Prostate gland (tissue), 2 donors: ENCODE measurements at regions of chr15 and their contacts with region 1.

Region 1: GRCh38 chr15:36501063-36501678 is 78.3 kb upstream of the CDIN1 start:
- DNase-seq: peak; percentile 46
- H3K4me3 ChIP-seq: no peak overlapping the region
- H3K27ac ChIP-seq: no peak overlapping the region
- H3K4me1 ChIP-seq: no peaks in the 10 kb centered on the region
- H3K27me3 ChIP-seq: no peaks in the 10 kb centered on the region
- CTCF ChIP-seq: peak; percentile 41 to 71 (median 58)
- POLR2A ChIP-seq: no peak

Region 2: GRCh38 chr15:36877796-36878683 is 376.9 kb after region 1 on chr15:
- intact Hi-C with region 1: loop called (anchors 10 kb)
- DNase-seq: no peak
- H3K4me3 ChIP-seq: no peak overlapping the region
- H3K27ac ChIP-seq: no peak overlapping the region
- H3K4me1 ChIP-seq: peaks cover 3% of the 10 kb centered on the region
- H3K27me3 ChIP-seq: no peaks in the 10 kb centered on the region
- CTCF ChIP-seq: no peak
- POLR2A ChIP-seq: no peak